ENCODE measurements at regions of chr2 and their contacts with region 1.

Region 1: DNA sequence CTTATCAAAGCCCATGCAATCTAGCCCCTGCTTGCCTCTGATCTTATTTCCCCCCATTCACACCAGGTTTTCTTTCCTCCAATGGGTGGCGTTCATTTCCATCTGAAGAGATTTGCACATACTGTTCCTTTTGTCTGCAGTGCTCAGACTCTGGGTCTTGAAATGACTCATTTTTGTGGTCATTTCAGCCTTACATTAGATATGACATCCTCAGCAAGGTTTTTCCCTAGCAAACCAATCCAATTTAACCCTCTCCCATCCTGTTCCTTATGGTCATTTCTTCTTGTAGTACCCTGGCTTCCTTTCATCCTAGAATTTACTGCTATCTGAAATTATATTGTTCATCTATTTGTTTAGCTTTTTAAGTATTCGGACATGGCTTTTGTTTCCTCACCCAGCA is 42.5 kb upstream of the SCN1A start:
- DNase-seq: no peak
- ATAC-seq: no peak
- H3K4me3 ChIP-seq: no peak overlapping the region
- H3K27ac ChIP-seq: no peak overlapping the region
- H3K4me1 ChIP-seq: no peaks in the 10 kb centered on the region
- H3K27me3 ChIP-seq: no peaks in the 10 kb centered on the region
- CTCF ChIP-seq: no peak

Region 2: GRCh38 chr2:166516712-166517303 is 346.5 kb after region 1 on chr2:
- CTCF ChIA-PET with region 1: no interaction called
- POLR2A ChIA-PET with region 1: no interaction called
- in situ Hi-C with region 1: no loop called
- intact Hi-C with region 1: loop called (anchors 10 kb)
- DNase-seq: no peak
- ATAC-seq: no peak
- H3K4me3 ChIP-seq: no peak overlapping the region
- H3K27ac ChIP-seq: no peak overlapping the region
- H3K4me1 ChIP-seq: no peaks in the 10 kb centered on the region
- H3K27me3 ChIP-seq: no peaks in the 10 kb centered on the region
- CTCF ChIP-seq: peak; percentile 66; the same call in 1 of the 2 replicates

Measured in Panc1 (cell line).